ENCODE measurements at regions of chr7 and their contacts with region 1.

Region 1: GRCh38 chr7:149771721-149772240 is 1.6 kb downstream of the ZNF467 start:
- DNase-seq: peak; percentile 95
- H3K4me3 ChIP-seq: peak overlapping the region; percentile 11 to 68 (median 44)
- H3K27ac ChIP-seq: no peak overlapping the region
- H3K4me1 ChIP-seq: peaks cover 19% of the 10 kb centered on the region
- H3K27me3 ChIP-seq: no peaks in the 10 kb centered on the region
- CTCF ChIP-seq: no peak
- POLR2A ChIP-seq: peak; percentile 51

Region 2: DNA sequence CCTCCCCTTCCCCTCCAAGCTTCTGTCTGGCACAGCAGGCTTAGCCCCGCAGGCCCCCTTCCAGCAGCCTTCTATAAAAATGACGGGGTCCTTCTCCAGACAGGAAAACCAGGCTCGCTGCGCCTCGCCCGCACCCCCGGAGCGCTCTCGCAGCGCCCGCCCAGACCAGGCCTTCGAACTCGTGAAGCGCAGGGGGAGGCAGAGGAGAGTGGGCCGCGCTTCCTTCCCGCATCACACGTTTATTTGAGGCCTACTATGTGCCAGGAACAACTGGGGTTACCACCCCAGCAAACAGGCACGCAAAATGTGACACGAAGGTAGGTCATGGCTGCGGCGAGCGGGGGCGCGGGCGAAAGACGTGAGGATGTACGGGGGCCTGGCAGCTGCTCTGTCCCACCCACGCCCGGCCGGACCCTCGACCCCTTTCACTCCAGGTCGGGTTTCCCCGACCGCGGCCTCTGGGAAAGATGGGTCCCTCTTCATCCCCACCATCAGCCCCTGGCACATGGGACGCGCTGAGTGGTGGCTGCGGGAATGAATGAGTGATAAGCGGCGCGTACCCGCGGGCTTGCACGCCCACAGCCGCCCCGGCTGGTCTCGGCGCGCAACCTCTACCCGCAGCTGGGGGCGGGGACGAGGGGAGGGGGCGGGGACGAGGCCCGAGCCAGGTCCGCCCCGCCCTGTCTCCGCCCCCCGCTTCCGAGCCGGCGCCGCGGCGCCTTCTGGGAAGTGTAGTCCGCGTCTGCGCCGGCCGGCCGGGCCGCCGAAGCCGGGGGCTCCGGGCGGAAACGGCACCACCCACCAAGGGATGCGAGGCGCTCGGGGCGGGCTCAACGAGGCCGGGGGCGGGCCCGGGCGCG is 57.5 kb before region 1 on chr7:
- CTCF ChIA-PET with region 1: interaction called, 5 read pairs
- POLR2A ChIA-PET with region 1: no interaction called
- dilution Hi-C with region 1: no loop called
- intact Hi-C with region 1: loop called (anchors 1 kb)
- DNase-seq: peak; percentile 78
- H3K4me3 ChIP-seq: peak overlapping the region; percentile 38 to 86 (median 51)
- H3K27ac ChIP-seq: no peak overlapping the region
- H3K4me1 ChIP-seq: peaks cover 11% of the 10 kb centered on the region
- H3K27me3 ChIP-seq: peaks cover 0 to 4% of the 10 kb centered on the region in 2 experiments
- CTCF ChIP-seq: no peak
- POLR2A ChIP-seq: no peak

Region 3: DNA sequence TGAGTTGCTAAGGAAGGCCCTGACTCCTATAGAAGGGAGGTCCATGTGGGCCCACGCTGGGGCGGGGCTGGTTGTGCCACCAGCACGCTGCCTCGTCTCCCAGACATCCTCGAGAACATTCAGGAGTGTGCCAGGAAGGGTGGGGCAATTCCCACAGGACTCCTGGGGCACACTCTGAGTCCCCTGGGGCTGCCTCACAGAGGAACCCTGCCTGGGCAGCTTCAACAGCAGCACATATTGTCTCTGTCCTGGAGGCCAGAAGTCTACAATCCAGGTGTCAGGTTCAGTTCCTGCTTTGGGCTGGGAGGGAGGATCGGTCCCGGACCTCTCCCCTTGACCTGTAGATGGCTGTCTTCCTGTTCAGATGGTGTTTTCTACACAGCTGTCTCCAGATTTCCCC is 37.2 kb before region 1 on chr7:
- CTCF ChIA-PET with region 1: no interaction called
- POLR2A ChIA-PET with region 1: no interaction called
- dilution Hi-C with region 1: no loop called
- intact Hi-C with region 1: no loop called
- DNase-seq: no peak
- H3K4me3 ChIP-seq: no peak overlapping the region
- H3K27ac ChIP-seq: no peak overlapping the region
- H3K4me1 ChIP-seq: no peaks in the 10 kb centered on the region
- H3K27me3 ChIP-seq: no peaks in the 10 kb centered on the region
- CTCF ChIP-seq: no peak
- POLR2A ChIP-seq: no peak

Region 4: GRCh38 chr7:149790146-149790548 is 18.4 kb after region 1 on chr7:
- CTCF ChIA-PET with region 1: interaction called, 15 read pairs
- POLR2A ChIA-PET with region 1: no interaction called
- dilution Hi-C with region 1: no loop called
- intact Hi-C with region 1: loop called (anchors 2 kb)
- DNase-seq: peak; percentile 41
- H3K4me3 ChIP-seq: no peak overlapping the region
- H3K27ac ChIP-seq: no peak overlapping the region
- H3K4me1 ChIP-seq: no peaks in the 10 kb centered on the region
- H3K27me3 ChIP-seq: peaks cover 4 to 10% of the 10 kb centered on the region in 2 experiments
- CTCF ChIP-seq: peak; percentile 60 to 84
- POLR2A ChIP-seq: no peak

Region 5: GRCh38 chr7:149838224-149838947 is 66.6 kb after region 1 on chr7 and contains the start of gene ZNF862:
- CTCF ChIA-PET with region 1: no interaction called
- POLR2A ChIA-PET with region 1: no interaction called
- dilution Hi-C with region 1: no loop called
- intact Hi-C with region 1: loop called (anchors 1 kb)
- DNase-seq: peak; percentile 98
- H3K4me3 ChIP-seq: peak within 1 kb of the TSS; percentile 2 to 83 (median 48)
- H3K27ac ChIP-seq: no peak within 1 kb of the TSS
- H3K4me1 ChIP-seq: no peaks in the 10 kb centered on the region
- H3K27me3 ChIP-seq: no peaks in the 10 kb centered on the region
- CTCF ChIP-seq: no peak
- POLR2A ChIP-seq: peak; percentile 51
- total RNA-seq, gene ZNF862: 7.2 and 14.7 TPM in 2 replicates

Region 6: GRCh38 chr7:149873074-149873969 is 101.5 kb after region 1 on chr7 and contains the start of gene ATP6V0E2:
- CTCF ChIA-PET with region 1: no interaction called
- POLR2A ChIA-PET with region 1: no interaction called
- dilution Hi-C with region 1: no loop called
- intact Hi-C with region 1: loop called (anchors 5 kb)
- DNase-seq: peak; percentile 94
- H3K4me3 ChIP-seq: peak within 1 kb of the TSS; percentile 48 to 65 (median 65)
- H3K27ac ChIP-seq: peak within 1 kb of the TSS; percentile 68
- H3K4me1 ChIP-seq: peaks cover 13% of the 10 kb centered on the region
- H3K27me3 ChIP-seq: no peaks in the 10 kb centered on the region
- CTCF ChIP-seq: no peak
- POLR2A ChIP-seq: peak; percentile 59
- total RNA-seq, gene ATP6V0E2: 21.5 and 27.8 TPM in 2 replicates

Measured in endothelial cell of umbilical vein (primary cell).